ENCODE measurements at regions of chr20 and their contacts with region 1.

Region 1: DNA sequence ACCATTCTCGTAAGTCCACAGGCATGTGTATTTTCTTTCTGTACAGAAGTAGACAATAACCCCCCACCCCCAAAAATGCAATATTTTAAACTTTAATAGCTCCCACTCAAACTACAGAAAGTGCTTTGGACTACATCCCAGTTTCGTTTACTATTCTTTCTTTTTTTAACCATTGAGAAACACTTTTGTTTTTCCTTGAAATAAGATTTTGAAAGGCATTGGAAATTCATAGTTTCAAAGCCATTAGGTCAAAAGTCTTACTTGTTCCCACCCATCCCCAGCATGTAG is 140.0 kb downstream of the KIF16B start:
- DNase-seq: no peak
- H3K4me3 ChIP-seq: no peak overlapping the region
- H3K27ac ChIP-seq: no peak overlapping the region
- H3K4me1 ChIP-seq: no peaks in the 10 kb centered on the region
- H3K27me3 ChIP-seq: no peaks in the 10 kb centered on the region
- CTCF ChIP-seq: no peak

Region 2: GRCh38 chr20:16488616-16489015 is 55.4 kb after region 1 on chr20:
- CTCF ChIA-PET with region 1: interaction called, 14 read pairs
- POLR2A ChIA-PET with region 1: no interaction called
- intact Hi-C with region 1: no loop called
- DNase-seq: no peak
- H3K4me3 ChIP-seq: no peak overlapping the region
- H3K27ac ChIP-seq: no peak overlapping the region
- H3K4me1 ChIP-seq: no peaks in the 10 kb centered on the region
- H3K27me3 ChIP-seq: no peaks in the 10 kb centered on the region
- CTCF ChIP-seq: no peak